Cardiac septum (tissue), 1 donor: ENCODE measurements at regions of chr2 and their contacts with region 1.

Region 1: DNA sequence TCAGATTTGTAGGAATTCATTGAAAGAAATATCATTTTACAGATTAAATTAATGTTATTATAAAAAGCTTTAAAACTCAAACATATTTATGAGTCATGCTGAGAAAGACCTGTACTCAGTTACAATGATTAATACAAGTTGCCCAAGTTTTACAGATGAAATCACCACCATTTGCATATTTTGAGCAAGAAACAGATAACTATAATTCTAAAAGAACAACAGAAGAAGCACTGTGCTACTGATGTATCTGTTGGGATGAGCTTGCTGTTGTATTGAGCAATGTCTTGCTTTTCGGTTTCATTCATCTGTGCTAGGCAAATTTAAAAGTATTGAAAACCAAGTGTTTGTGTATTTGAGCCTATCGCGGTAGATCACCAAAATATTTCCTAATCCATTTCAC is 1589.1 kb upstream of the ZEB2 start:
- DNase-seq: no peak

Region 2: GRCh38 chr2:146124741-146125140 is 15.7 kb after region 1 on chr2:
- intact Hi-C with region 1: loop called (anchors 1 kb)
- DNase-seq: no peak

Region 3: DNA sequence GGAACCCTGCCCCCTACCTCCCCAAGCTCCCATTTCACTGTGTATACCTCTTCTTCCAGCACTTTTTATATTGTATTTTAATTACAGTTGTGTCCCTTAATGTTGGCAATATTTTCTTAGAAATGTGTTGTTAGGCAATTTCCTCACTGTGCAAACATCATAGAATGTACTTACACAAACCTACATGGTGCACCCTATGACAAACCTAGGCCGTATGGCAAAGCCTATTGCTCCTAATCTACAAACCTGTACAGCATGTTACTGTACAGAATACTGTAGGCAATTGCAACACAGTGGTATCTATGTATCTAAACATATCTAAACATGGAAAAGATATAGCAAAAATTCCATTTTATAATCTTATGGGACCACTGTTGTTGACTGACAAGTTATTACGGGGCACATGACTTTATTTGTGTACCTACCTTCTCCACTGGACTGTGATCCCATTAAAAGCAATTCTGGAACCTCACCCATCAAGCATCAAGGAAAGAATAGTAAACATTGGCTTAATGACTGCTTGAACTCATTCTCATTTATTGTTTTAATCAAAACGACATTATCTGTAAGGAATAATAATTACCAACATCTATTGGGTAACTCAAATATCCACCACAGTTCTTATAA is 52.4 kb after region 1 on chr2:
- intact Hi-C with region 1: no loop called
- DNase-seq: no peak

Region 4: GRCh38 chr2:146278881-146279280 is 169.9 kb after region 1 on chr2:
- intact Hi-C with region 1: no loop called
- DNase-seq: no peak

Region 5: GRCh38 chr2:146954544-146954943 is 845.6 kb after region 1 on chr2:
- intact Hi-C with region 1: no loop called
- DNase-seq: no peak